ENCODE measurements at regions of chr2 and their contacts with region 1.

Region 1: DNA sequence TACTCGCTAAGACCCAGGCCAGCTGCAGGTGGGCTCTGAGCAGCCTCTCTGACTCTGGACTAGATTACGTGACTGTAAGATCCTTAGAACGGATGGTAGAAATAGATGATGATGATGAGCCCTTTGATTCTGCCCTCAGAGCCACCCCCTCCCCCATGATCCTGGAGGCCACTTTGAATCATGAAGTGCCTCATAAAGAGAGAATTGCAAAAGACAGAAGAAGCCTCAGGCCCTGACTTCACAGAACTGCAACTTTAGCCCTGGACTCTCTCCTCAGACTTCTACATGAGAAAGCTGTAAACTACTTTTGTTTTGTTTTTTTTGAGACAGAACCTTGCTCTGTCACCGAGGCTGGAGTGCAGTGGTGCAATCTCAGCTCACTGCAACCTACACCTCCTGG is 15.4 kb upstream of the TET3 start:
- DNase-seq: no peak
- H3K4me3 ChIP-seq: no peak overlapping the region
- H3K27ac ChIP-seq: no peak overlapping the region
- H3K4me1 ChIP-seq: peaks cover 4% of the 10 kb centered on the region
- H3K27me3 ChIP-seq: no peaks in the 10 kb centered on the region
- CTCF ChIP-seq: no peak

Region 2: GRCh38 chr2:73851274-73851673 is 118.1 kb before region 1 on chr2:
- CTCF ChIA-PET with region 1: no interaction called
- dilution Hi-C with region 1: no loop called
- in situ Hi-C with region 1: no loop called
- intact Hi-C with region 1: no loop called
- DNase-seq: no peak
- H3K4me3 ChIP-seq: no peak overlapping the region
- H3K27ac ChIP-seq: no peak overlapping the region
- H3K4me1 ChIP-seq: peaks cover 21% of the 10 kb centered on the region
- H3K27me3 ChIP-seq: no peaks in the 10 kb centered on the region
- CTCF ChIP-seq: peak; percentile 52 to 62

Region 3: GRCh38 chr2:73892631-73893329 is 76.6 kb before region 1 on chr2 and contains the start of gene ACTG2:
- CTCF ChIA-PET with region 1: no interaction called
- dilution Hi-C with region 1: loop called (anchors 5 kb)
- in situ Hi-C with region 1: no loop called
- intact Hi-C with region 1: no loop called
- DNase-seq: no peak
- H3K4me3 ChIP-seq: no peak within 1 kb of the TSS
- H3K27ac ChIP-seq: no peak within 1 kb of the TSS
- H3K4me1 ChIP-seq: peaks cover 10% of the 10 kb centered on the region
- H3K27me3 ChIP-seq: no peaks in the 10 kb centered on the region
- CTCF ChIP-seq: no peak
- total RNA-seq, gene ACTG2: 2.2 to 365 TPM

Region 4: DNA sequence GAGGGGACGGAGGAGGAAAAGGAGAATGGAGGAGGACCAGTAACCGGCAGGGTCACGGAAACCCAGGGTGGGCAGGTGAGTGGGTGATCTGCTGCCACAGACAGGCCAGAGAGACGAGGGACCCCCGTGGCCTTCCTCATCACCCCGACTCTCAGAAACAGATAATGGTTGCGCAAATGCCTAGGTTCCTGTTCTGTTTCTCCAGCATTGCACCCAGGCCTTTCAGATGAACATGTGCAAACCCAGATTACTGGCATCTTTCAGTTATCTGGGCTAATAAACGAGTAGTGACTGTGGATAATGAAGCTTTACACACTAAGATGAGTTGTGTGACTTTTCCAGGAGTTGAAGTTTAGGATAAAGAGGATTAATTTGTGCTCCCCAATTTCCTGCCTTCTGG is 61.9 kb after region 1 on chr2:
- CTCF ChIA-PET with region 1: no interaction called
- dilution Hi-C with region 1: loop called (anchors 5 kb)
- in situ Hi-C with region 1: no loop called
- intact Hi-C with region 1: no loop called
- DNase-seq: no peak
- H3K4me3 ChIP-seq: no peak overlapping the region
- H3K27ac ChIP-seq: no peak overlapping the region
- H3K4me1 ChIP-seq: no peaks in the 10 kb centered on the region
- H3K27me3 ChIP-seq: no peaks in the 10 kb centered on the region
- CTCF ChIP-seq: no peak

Region 5: DNA sequence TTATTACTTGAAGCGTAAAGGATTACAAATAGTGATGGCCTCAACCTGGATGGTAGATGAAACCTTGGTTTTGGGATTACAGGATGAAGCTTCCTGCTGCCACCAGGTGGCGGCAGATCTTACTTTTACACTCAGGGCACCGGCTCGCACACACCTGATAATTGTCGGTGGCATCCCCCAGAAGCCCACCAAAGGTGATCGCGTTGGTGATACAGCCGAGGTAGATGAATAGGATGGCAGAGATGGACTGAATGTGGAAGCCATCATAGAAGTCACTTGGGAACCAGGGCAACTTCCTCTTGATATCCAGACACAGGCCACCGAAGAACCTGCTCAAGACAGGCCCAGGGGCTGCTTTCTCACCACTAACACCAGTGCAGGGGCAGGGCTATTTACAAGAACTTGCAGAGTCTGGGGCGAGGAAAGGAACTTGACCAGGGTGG is 280.9 kb after region 1 on chr2:
- CTCF ChIA-PET with region 1: no interaction called
- dilution Hi-C with region 1: no loop called
- in situ Hi-C with region 1: no loop called
- intact Hi-C with region 1: no loop called
- DNase-seq: peak; percentile 9
- H3K4me3 ChIP-seq: no peak overlapping the region
- H3K27ac ChIP-seq: no peak overlapping the region
- H3K4me1 ChIP-seq: no peaks in the 10 kb centered on the region
- H3K27me3 ChIP-seq: no peaks in the 10 kb centered on the region
- CTCF ChIP-seq: peak; percentile 71 to 80

Measured in mammary epithelial cell (primary cell).